Sciatic nerve (tissue), 2 donors: ENCODE measurements at regions of chr11 and their contacts with region 1.

Region 1: GRCh38 chr11:68164437-68164836 is 43.2 kb upstream of the CHKA start:
- DNase-seq: no peak
- ATAC-seq: no peak

Region 2: DNA sequence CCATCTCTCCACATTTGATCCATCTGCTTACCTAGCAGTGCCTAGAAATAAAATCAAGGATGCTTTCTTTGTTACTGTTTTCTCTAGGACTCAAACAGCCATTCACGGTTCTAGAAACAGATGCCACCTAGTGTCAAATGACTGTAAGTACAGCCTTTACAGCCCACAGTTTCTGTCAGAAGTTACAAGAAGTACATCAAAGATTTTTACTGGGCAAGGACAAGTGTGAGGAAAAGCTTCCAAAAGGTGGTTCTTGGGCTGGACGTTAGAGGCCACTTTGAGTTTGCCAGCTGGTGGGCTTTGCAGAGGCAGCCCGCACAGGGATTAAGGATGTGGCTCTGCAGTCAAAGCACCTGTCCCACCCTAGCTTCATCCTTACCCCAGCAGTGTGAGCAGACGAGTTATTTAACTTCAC is 41.8 kb after region 1 on chr11:
- intact Hi-C with region 1: loop called (anchors 1 kb)
- DNase-seq: no peak
- ATAC-seq: peak; percentile 58

Region 3: GRCh38 chr11:68282141-68282970 is 117.9 kb after region 1 on chr11:
- intact Hi-C with region 1: no loop called
- DNase-seq: no peak
- ATAC-seq: no peak

Region 4: DNA sequence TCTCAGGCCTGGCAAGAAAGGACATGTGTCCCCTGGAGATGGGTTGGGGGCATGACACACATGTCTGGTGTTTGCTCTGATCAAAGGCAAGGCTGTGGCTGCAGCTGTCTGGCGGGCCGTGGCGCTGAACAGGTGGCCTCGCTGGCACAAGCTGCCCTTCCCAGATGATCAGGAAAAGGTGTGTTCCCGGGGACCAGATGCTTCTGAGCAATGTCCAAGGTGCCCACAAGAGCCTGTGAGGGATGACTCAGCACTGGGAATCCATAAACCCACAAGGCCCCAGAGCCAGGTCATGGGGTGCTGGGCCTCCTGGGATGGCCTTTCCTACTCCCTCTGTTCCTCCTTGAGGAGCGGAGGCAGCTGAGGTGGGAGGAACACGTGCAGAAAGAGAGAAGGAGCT is 138.2 kb after region 1 on chr11:
- intact Hi-C with region 1: no loop called
- DNase-seq: no peak
- ATAC-seq: no peak

Region 5: DNA sequence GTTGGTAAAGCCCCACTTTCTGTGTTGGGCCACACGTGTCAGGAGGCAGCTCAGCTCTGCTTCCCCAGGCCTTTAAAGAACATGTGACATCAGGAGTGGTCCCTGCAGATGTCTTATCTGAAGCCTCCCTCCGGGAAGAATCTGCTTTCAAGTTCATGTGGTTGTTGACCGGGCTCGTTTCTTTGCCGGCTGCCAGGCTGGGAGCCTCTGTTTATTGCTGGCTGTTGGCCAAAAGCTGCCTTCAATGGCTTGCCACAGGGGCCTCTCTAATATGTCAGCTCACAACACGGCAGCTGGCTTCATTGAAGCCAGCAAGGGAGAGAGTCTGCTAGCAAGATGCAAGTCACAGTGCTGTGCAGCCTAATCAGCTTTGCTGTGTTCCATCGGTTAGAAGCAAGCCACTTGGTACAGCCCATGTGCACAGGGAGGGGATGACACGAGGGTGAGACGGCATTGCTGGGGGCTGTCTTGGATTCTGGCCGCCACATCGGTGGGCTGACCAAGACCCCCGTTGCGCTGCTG is 834.0 kb after region 1 on chr11:
- intact Hi-C with region 1: no loop called
- DNase-seq: peak; percentile 64
- ATAC-seq: no peak